ENCODE measurements at regions of chr11 and their contacts with region 1.

Region 1: GRCh38 chr11:117200813-117201657 is 1.9 kb downstream of the TAGLN start:
- DNase-seq: no peak
- ATAC-seq: no peak
- H3K4me3 ChIP-seq: no peak overlapping the region
- H3K27ac ChIP-seq: no peak overlapping the region
- H3K4me1 ChIP-seq: peaks cover 9% of the 10 kb centered on the region
- H3K27me3 ChIP-seq: no peaks in the 10 kb centered on the region
- CTCF ChIP-seq: no peak
- EP300 ChIP-seq: no peak
- POLR2A ChIP-seq: no peak
- RAD21 ChIP-seq: no peak

Region 2: DNA sequence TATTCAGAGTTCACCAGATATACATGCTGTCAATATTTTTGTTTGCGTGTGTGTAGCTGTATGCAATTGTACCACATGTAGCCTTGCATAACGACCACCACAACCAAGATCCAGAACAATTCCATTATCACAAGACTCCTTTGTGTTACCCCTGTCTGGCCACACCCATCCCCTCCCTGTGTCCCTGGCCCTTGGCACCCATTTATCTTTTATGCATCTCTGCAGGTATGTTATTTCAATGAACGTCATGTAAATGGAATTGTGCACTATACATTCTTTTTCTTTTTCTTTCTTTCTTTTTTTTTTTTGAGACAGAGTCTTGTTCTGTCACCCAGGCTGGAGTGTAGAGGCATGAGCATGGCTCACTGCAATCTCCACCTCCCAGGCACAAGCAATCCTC is 66.6 kb before region 1 on chr11:
- CTCF ChIA-PET with region 1: no interaction called
- POLR2A ChIA-PET with region 1: no interaction called
- in situ Hi-C with region 1: loop called (anchors 5 kb)
- intact Hi-C with region 1: loop called (anchors 5 kb)
- DNase-seq: no peak
- ATAC-seq: no peak
- H3K4me3 ChIP-seq: no peak overlapping the region
- H3K27ac ChIP-seq: no peak overlapping the region
- H3K4me1 ChIP-seq: peaks cover 12% of the 10 kb centered on the region
- H3K27me3 ChIP-seq: no peaks in the 10 kb centered on the region; a peak in 1 of 5 replicates
- CTCF ChIP-seq: no peak
- EP300 ChIP-seq: no peak
- POLR2A ChIP-seq: no peak
- RAD21 ChIP-seq: no peak

Region 3: DNA sequence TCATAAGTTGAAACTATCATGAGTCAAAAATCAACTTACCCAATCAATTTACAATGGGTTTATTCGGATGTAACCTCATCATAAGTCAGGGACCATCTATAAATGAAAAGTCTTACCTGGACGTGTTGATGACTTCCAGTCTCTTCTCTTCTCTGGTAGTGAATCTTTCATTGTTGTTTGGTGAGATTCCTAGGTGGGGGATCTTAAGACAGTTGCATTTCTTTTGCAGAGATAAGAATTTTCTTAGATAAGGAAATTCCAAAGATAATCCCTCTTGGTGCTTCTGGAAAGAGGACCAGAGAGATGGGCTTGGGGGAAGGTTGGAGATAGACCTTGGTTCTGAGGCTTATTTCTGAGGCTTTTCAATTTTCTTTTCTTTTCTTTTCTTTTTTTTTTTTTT is 68.8 kb after region 1 on chr11:
- CTCF ChIA-PET with region 1: no interaction called
- POLR2A ChIA-PET with region 1: no interaction called
- in situ Hi-C with region 1: no loop called
- intact Hi-C with region 1: no loop called
- DNase-seq: no peak
- ATAC-seq: no peak
- H3K4me3 ChIP-seq: no peak overlapping the region
- H3K27ac ChIP-seq: no peak overlapping the region
- H3K4me1 ChIP-seq: peaks cover 16% of the 10 kb centered on the region
- H3K27me3 ChIP-seq: no peaks in the 10 kb centered on the region
- CTCF ChIP-seq: no peak
- EP300 ChIP-seq: no peak
- POLR2A ChIP-seq: no peak
- RAD21 ChIP-seq: no peak